Gastrocnemius medialis (tissue), 4 donors: ENCODE measurements at regions of chr6 and their contacts with region 1.

Region 1: DNA sequence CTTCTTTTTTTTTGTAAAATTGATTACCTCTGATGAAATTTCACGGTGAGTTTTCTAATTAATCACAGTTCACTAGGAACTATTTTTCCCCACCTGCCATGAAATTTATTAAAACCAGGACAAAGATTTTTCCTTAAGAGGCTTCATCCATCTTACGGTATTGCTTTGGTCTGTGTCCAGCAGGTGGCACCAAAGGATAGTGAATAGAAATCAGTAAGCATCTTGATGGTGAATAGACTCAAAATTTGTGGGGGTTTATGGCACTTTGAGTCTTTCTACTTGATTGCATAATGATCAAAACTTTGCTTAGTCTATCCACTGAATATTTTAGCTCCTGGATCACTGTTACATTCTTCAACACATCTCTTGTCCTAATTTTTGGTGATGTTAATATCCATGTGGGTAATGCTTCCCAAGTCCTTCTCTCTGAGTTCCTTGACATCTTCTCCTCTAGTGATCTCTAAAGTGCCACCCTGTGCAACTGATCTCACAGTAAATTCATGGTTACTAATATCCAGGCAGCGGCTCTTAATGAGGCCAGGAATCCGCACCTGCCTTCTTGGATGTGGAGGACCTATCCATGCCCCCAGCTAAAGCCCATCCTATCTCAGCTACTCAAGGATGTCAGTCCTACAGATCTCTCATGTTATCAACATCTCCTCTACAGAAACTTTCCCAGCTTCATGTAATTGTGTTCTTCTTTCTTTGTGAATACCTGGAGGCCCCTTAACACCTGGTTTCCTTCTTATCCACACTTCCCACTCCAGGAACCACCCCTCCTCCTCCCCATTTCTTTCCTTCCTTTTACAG is 54.5 kb downstream of the STMND1 start:
- DNase-seq: peak; percentile 27 to 49
- ATAC-seq: peak; percentile 57 to 71
- H3K4me3 ChIP-seq: no peak overlapping the region
- H3K27ac ChIP-seq: no peak overlapping the region
- H3K4me1 ChIP-seq: no peaks in the 10 kb centered on the region
- H3K27me3 ChIP-seq: no peaks in the 10 kb centered on the region
- CTCF ChIP-seq: peak; percentile 75 to 82 (median 82)
- POLR2A ChIP-seq: no peak

Region 2: DNA sequence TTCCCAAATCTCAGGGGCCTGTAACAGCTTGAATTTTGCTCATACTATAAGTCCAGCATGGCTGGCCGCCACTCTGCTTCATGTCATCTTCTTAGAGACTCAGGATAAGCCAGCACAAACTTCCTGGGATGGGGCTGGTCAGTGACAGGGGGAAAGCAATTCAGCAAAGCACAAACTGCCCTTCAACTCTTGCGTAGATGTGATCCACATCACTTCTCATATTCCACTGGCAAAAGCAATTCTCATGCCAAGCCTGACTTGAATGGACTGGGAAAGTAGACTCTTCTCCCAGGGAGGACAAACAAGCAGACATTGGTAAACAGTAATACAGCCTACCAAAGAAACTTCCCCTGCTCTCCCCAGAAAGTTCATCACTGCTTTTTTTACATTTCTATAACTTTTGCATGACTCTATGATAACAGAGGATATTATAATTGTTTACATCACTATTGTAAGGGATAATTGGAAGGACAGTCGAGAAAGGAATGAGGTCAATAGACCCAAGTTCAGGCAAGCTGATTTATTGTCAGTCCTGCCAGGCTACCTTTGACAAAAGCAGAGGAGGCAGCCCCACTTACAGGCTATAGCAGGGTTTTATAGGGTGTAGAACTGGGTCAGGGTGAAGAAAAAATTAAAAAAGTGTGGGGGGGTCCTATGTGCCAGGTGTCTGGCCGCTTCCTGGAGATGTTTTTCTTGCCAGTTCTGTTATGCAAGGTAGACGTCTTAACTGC is 162.3 kb after region 1 on chr6:
- in situ Hi-C with region 1: no loop called
- intact Hi-C with region 1: no loop called
- DNase-seq: peak; percentile 75 to 89
- ATAC-seq: peak; percentile 98
- H3K4me3 ChIP-seq: no peak overlapping the region
- H3K27ac ChIP-seq: peak overlapping the region; percentile 88 to 97 (median 94)
- H3K4me1 ChIP-seq: peaks cover 24 to 32% of the 10 kb centered on the region in 2 donors
- H3K27me3 ChIP-seq: no peaks in the 10 kb centered on the region
- CTCF ChIP-seq: no peak
- POLR2A ChIP-seq: peak; percentile 51 to 74

Region 3: GRCh38 chr6:17354700-17355403 is 198.5 kb after region 1 on chr6:
- in situ Hi-C with region 1: loop called in 2 of 4 experiments (anchors 25 kb)
- intact Hi-C with region 1: no loop called
- DNase-seq: no peak
- ATAC-seq: peak; percentile 81 to 97
- H3K4me3 ChIP-seq: no peak overlapping the region
- H3K27ac ChIP-seq: peak overlapping the region; percentile 39 to 68 (median 62)
- H3K4me1 ChIP-seq: peaks cover 0 to 9% of the 10 kb centered on the region in 2 donors
- H3K27me3 ChIP-seq: no peaks in the 10 kb centered on the region
- CTCF ChIP-seq: no peak
- POLR2A ChIP-seq: no peak

Region 4: GRCh38 chr6:17584241-17584803 is 428.0 kb after region 1 on chr6:
- in situ Hi-C with region 1: loop called (anchors 5 to 10 kb)
- intact Hi-C with region 1: loop called (anchors 1 kb)
- DNase-seq: peak in 1 of 2 donors; percentile 33
- ATAC-seq: peak; percentile 92 to 93
- H3K4me3 ChIP-seq: peak overlapping the region; percentile 2 to 48 (median 32)
- H3K27ac ChIP-seq: peak overlapping the region; percentile 66 to 85 (median 75)
- H3K4me1 ChIP-seq: peaks cover 7 to 8% of the 10 kb centered on the region in 2 donors
- H3K27me3 ChIP-seq: no peaks in the 10 kb centered on the region
- CTCF ChIP-seq: peak; percentile 78 to 97 (median 86)
- POLR2A ChIP-seq: no peak

Region 5: DNA sequence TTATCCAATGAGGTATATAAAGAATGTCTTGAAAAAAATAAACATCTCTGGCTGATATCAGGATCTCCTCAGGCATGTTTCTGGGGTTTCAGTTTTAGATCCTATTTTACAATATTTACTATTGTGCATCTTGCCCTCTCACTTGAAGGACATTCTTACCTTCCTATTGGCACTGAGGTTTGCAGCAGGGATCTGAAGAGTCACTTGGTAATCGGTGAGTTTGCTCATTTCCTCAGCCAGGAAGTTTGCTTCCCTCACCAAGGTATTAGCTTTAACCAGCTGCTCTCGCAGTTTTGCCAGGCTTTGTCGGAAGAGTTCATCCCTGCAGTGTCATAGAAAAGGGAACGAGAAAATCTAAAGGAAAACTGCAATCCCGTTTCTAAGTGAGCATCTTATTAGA is 652.3 kb after region 1 on chr6:
- in situ Hi-C with region 1: loop called (anchors 10 kb)
- intact Hi-C with region 1: loop called (anchors 5 kb)
- DNase-seq: no peak
- ATAC-seq: no peak
- H3K4me3 ChIP-seq: no peak overlapping the region
- H3K27ac ChIP-seq: no peak overlapping the region
- H3K4me1 ChIP-seq: no peaks in the 10 kb centered on the region
- H3K27me3 ChIP-seq: no peaks in the 10 kb centered on the region
- CTCF ChIP-seq: no peak
- POLR2A ChIP-seq: no peak

Region 6: DNA sequence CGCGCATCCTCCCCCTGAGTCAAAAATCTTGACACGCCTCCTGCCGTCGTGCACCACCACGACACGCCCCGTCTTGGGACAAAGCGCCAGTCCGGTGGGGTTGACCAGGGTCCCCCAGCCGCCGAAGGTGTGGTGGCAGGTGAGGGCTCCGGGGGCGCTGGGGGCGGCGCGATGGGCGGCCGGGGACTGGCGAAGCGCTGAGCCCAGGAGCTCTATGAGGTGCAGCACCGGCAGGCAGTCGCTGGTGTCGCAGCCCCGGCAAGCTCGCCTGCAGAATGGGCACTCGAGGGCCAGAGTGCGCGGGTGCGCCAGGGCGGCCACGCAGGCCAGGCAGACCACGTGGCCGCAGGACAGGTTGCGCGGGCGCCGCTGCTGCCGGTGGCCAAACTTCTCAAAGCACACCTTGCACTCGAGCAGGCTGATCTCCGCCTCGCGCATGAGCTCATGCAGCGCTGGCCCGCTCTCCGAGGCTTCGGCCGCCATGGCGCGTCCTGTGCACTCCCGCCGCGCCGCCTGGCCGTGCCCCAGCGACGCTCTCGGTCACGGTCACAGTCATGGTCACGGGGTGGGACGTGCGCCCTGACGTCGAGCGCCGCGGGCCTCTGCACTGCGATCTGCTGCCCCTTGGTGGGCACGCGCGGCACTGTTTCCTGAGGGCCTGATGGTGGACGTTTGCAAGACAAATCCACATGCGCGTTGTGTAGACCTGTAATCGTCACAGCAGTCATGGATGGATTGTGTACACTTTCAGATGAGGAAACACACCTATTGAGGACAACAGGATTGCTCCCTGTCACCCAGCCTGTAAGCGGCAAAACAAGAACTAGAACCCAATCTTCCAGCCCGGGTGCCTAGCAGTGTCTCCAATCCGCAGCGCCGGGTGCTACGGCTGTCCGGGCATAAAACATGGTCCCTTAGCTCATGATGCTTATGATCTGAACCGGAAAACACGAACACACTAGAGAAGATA is 966.1 kb after region 1 on chr6 and contains the start of gene NHLRC1:
- in situ Hi-C with region 1: loop called in 3 of 4 experiments (anchors 25 kb)
- intact Hi-C with region 1: loop called (anchors 2 kb)
- DNase-seq: peak; percentile 85 to 90
- ATAC-seq: peak; percentile 97 to 98
- H3K4me3 ChIP-seq: peak within 1 kb of the TSS; percentile 62 to 97 (median 68)
- H3K27ac ChIP-seq: peak within 1 kb of the TSS; percentile 79 to 89 (median 86)
- H3K4me1 ChIP-seq: peaks cover 12 to 20% of the 10 kb centered on the region in 2 donors
- H3K27me3 ChIP-seq: no peaks in the 10 kb centered on the region
- CTCF ChIP-seq: peak; percentile 97 to 99 (median 98)
- POLR2A ChIP-seq: peak; percentile 68
- total RNA-seq, gene NHLRC1: 0.56 to 1.9 (median 1.4) TPM